Mammary epithelial cell (primary cell): ENCODE measurements at regions of chr10 and their contacts with region 1.

Region 1: DNA sequence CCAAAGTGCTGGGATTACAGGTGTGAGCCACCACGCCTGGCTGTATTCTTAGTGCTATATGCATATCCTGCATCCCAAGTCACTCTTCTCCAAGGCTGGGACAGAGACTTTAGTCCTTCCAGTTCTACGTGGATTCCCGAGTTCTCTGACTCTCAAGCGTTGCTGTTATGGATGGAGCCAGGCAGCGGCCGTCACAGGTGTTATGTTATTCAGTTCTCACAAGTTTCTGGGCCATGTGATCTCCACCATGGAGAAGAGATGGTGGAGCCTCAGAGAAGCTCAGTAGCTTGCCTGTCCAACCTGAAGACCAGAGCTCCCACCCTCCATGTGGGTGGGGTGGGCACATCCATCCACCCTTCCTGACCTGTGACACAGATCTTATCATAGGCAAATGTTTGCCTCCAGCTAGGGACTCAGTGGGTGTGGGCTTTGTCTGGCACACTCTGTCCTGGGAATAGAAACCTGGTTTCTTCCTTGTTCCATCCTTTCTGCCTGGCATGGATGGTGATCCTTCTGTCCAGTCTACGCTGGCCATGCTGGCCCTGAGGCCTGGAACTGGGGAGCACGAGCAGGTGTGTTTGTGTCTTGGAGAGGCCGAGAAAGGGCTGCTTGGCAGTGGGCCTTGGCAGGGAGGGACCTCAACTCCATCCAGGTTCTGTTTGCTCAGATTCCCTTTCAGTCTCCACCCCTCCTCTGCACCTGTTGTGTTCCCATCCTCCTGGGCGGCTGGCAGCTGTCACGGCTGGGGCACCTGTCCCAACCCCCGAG is 55.3 kb downstream of the NEURL1 start:
- DNase-seq: no peak
- H3K4me3 ChIP-seq: no peak overlapping the region
- H3K27ac ChIP-seq: no peak overlapping the region
- H3K4me1 ChIP-seq: no peaks in the 10 kb centered on the region
- H3K27me3 ChIP-seq: no peaks in the 10 kb centered on the region
- CTCF ChIP-seq: no peak

Region 2: DNA sequence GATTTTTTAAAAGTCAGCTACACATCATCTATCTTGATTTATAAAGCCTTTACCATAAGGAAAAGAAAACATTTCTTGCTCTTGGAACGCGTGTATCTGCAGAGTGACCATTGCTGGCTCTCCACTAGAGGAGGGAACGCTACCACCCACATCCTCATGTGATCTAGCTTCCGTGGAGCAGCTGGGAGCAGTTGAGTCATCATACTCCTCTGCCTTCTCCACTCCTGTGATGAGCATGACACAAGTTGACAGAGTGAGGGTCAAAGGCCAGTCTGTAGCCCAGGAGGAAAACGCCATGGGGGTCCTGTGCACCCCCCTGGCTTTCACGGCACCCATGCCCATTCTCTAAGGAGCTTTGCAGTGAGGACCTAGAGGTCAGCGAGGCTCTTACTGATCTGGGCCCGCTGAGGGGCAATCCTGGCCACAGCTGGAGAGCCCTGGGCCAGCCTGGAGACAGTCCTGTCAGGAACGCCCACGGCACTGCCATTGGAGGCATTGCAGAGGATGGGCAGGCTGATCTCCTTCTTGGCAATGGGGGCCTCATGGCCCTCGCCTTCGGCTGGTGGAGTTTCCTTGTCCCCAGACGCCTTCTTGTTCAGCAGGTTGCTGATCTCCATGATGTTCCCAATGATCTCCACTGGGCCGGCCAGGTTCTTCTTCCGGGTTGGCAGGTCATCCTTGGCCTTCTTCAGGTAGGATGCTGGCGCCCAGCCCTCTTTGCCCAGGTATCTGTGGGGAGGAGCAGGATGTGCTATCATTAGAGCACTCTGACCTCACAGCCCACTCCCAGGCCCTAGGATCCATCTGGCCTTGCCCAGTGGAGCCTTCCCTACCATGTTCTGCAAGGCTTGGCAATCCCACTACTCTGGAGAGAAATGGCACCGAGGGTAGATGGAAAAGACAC is 63.9 kb after region 1 on chr10:
- CTCF ChIA-PET with region 1: no interaction called
- dilution Hi-C with region 1: loop called (anchors 5 kb)
- in situ Hi-C with region 1: no loop called
- intact Hi-C with region 1: no loop called
- DNase-seq: no peak
- H3K4me3 ChIP-seq: no peak overlapping the region
- H3K27ac ChIP-seq: no peak overlapping the region
- H3K4me1 ChIP-seq: no peaks in the 10 kb centered on the region
- H3K27me3 ChIP-seq: no peaks in the 10 kb centered on the region
- CTCF ChIP-seq: no peak